ENCODE measurements at regions of chr6 and their contacts with region 1.

Region 1: DNA sequence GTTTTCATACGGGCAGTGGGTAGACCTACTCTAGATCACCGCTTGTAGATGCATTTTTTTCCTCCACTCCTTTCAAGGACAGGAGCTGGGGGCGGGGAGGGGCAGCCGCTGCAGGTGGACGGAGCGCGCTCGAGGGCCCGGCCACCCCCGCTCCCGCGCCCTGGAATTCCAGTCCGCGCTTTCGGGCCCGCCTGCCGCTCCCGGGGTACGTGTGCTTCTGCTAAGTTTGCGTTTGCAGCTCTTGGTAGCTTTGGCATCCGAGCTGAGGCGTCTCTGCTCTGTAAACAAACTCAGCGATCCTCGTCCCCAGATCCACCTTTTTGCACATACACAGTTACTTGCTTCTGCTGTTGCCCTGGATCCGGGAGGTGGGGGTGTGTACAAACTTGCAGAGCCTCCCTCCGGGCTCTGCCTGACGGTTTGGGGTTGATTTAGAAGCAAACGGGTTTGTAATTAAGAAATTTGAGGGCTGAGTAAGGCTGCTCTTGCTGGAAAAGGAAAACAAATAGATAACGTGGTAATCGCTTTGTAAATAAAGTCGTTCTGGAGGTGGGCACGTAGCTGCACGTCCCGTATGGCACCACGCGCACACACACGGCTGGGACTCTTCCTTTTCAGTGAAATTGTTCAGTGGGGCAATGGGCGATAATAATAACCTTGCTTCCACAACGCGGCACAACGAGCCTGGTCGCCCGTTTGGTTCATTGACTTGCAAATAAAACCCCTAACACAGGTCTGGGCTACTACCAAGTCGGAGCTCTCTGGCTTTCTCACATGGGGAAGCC is 976 bp upstream of the CITED2 start:
- DNase-seq: peak; percentile 80
- H3K4me3 Mint-ChIP-seq: peak overlapping the region; percentile 96
- H3K27ac Mint-ChIP-seq: peak overlapping the region; percentile 93
- H3K4me1 Mint-ChIP-seq: peaks cover 31% of the 10 kb centered on the region
- H3K27me3 Mint-ChIP-seq: no peaks in the 10 kb centered on the region

Region 2: DNA sequence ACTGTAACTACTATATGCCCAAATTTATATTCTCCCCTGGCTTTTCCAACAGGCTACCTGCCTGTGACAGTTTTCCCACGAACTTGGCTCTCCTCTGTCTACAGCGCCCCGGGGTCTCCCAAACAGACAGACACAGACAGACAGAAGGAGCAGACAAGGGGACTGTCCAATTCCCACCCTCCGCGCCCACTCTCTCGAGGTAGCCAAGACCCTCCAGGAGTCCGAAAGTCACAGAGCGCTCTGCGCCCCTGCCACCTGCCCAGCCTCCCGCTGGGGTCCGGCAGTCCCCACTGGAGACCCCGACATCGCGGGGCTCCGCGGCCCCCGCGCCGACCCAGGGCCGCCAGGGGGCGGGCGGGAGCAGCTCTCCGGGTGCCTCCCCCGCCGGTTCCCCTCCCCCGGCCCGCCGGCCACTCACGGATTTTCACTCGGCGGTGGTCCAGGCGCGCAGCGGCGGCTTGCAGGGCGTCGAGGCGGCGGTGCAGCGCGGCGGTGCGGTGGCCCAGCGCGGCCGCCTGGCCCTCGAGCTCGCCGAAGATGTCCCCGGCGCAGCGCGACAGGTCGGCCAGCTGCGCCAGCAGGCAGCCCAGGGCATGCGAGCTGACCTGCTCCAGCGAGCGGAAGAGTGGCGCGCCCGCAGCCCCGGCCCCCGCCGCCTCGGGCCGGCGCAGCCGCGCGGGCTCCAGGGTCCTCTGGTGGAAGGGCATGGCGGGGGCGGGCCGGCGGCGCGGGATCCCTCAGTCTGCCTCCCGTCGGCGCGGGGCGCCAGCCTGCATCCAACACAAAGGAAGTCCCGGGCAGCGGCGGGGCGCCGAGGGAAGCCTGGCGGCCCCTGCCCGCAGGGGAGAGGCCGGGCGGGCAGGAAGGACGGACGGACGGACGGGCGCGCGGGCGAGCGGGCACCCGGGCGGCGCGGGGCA is 683.1 kb before region 1 on chr6:
- CTCF ChIA-PET with region 1: no interaction called
- intact Hi-C with region 1: loop called (anchors 5 kb)
- DNase-seq: peak; percentile 50
- H3K4me3 Mint-ChIP-seq: peak overlapping the region; percentile 79
- H3K27ac Mint-ChIP-seq: no peak overlapping the region
- H3K4me1 Mint-ChIP-seq: peaks cover 5% of the 10 kb centered on the region
- H3K27me3 Mint-ChIP-seq: peaks cover 32% of the 10 kb centered on the region

Region 3: GRCh38 chr6:139028658-139029469 is 346.6 kb before region 1 on chr6 and contains the start of gene ABRACL:
- CTCF ChIA-PET with region 1: no interaction called
- intact Hi-C with region 1: loop called (anchors 1 kb)
- DNase-seq: peak; percentile 92
- H3K4me3 Mint-ChIP-seq: no peak within 1 kb of the TSS
- H3K27ac Mint-ChIP-seq: peak within 1 kb of the TSS; percentile 95
- H3K4me1 Mint-ChIP-seq: peaks cover 18% of the 10 kb centered on the region
- H3K27me3 Mint-ChIP-seq: no peaks in the 10 kb centered on the region
- total RNA-seq, gene ABRACL: 185 to 190 TPM

Region 4: GRCh38 chr6:139540276-139540675 is 164.9 kb after region 1 on chr6:
- CTCF ChIA-PET with region 1: interaction called, 3 read pairs
- intact Hi-C with region 1: loop called (anchors 1 kb)
- DNase-seq: peak; percentile 79
- H3K4me3 Mint-ChIP-seq: no peak overlapping the region
- H3K27ac Mint-ChIP-seq: peak overlapping the region; percentile 32
- H3K4me1 Mint-ChIP-seq: peaks cover 12% of the 10 kb centered on the region
- H3K27me3 Mint-ChIP-seq: no peaks in the 10 kb centered on the region

Region 5: DNA sequence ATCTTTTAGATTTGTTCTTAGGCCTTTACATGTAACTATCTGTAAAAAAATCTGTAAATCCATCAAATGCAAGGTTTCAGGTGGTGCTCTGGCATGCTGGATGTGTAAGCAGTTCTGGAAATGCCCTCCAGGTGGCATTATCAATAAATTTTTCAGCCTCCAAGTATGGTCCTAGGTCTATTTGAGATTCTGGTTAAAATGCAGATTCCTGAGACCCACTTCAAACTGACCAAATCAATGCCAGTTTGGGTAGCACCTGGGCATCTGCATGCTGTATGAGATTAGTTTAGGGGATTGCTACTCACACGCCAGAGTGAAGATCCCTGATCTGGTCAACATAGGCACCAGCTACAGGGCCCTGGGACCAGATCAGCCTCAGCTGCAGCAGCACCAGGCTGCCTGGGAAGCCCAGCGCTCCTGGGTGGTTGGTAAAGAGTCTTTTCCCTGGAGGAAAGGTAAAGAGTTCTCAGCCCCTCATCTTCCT is 506.3 kb after region 1 on chr6:
- CTCF ChIA-PET with region 1: no interaction called
- intact Hi-C with region 1: loop called (anchors 5 kb)
- DNase-seq: peak; percentile 46
- H3K4me3 Mint-ChIP-seq: no peak overlapping the region
- H3K27ac Mint-ChIP-seq: no peak overlapping the region
- H3K4me1 Mint-ChIP-seq: peaks cover 4% of the 10 kb centered on the region
- H3K27me3 Mint-ChIP-seq: no peaks in the 10 kb centered on the region

Region 6: DNA sequence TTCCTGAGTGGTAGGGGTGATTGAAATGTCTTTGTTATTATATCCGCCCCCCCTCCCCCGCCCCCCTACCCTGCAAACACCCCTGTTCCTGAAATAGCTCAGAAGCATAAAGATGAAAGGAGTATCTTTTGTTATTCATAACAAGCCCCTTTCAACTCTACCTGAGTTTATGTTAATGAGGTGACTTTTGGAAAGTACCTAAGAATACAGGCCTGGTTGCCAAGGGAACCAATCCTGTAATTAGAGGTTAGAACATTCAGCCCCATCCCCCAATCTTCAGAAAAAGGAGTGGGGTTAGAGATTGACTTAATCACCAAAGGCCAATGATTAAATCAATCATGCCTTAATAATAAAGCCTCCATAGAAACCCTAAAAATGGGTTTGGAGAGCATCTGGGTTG is 1778.1 kb after region 1 on chr6:
- CTCF ChIA-PET with region 1: no interaction called
- intact Hi-C with region 1: loop called (anchors 5 kb)
- DNase-seq: peak; percentile 66
- H3K4me3 Mint-ChIP-seq: no peak overlapping the region
- H3K27ac Mint-ChIP-seq: peak overlapping the region; percentile 56
- H3K4me1 Mint-ChIP-seq: peaks cover 24% of the 10 kb centered on the region
- H3K27me3 Mint-ChIP-seq: no peaks in the 10 kb centered on the region